OCI-LY7 (cell line): ENCODE measurements at regions of chr12 and their contacts with region 1.

Region 1: DNA sequence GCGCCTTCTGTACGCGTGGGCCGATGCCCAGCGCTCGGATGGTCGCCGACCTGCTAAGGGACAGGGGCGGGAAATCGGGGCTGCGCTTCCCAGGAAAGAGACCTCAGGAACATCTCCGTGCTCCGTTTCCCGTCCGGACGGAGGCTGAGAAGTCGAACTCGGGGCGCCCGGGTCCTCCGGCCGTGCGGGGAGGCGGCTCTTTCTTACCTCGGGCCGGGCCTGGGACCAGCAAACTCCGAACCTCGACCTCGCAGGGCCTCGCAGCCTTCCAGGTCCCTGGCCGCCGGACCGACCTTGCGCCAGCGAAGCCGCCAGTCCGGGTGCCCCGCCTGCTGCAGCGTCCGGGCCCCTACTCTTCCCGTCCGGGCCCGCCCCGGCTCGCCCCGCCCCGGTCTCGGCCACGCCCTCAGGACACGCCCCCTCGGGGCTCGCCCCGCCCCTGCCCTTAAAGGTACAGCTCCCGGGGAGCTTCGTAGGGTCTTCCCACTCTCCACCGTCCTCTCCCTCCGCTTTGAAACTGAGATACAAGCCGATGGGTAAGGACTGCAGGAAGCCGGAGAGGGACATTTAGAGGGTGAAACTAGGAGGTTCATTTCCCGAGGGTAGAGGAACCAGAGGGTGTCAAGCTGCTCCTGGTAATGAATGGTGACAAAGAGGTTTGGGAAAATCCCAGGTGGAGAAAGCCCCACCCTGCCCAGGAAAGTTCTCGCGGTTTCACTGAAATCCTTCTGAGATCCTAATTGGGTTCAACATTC is at the start of gene SLC8B1:
- DNase-seq: peak; percentile 86
- H3K4me3 ChIP-seq: peak within 1 kb of the TSS; percentile 77
- H3K27ac ChIP-seq: peak within 1 kb of the TSS; percentile 74
- H3K4me1 ChIP-seq: peaks cover 26% of the 10 kb centered on the region
- CTCF ChIP-seq: no peak
- total RNA-seq, gene SLC8B1: 40.6 and 47.1 TPM in 2 replicates

Region 2: GRCh38 chr12:112950701-112951100 is 384.3 kb before region 1 on chr12:
- CTCF ChIA-PET with region 1: no interaction called
- POLR2A ChIA-PET with region 1: no interaction called
- intact Hi-C with region 1: no loop called
- DNase-seq: no peak
- H3K4me3 ChIP-seq: no peak overlapping the region
- H3K27ac ChIP-seq: no peak overlapping the region
- H3K4me1 ChIP-seq: no peaks in the 10 kb centered on the region
- CTCF ChIP-seq: no peak

Region 3: DNA sequence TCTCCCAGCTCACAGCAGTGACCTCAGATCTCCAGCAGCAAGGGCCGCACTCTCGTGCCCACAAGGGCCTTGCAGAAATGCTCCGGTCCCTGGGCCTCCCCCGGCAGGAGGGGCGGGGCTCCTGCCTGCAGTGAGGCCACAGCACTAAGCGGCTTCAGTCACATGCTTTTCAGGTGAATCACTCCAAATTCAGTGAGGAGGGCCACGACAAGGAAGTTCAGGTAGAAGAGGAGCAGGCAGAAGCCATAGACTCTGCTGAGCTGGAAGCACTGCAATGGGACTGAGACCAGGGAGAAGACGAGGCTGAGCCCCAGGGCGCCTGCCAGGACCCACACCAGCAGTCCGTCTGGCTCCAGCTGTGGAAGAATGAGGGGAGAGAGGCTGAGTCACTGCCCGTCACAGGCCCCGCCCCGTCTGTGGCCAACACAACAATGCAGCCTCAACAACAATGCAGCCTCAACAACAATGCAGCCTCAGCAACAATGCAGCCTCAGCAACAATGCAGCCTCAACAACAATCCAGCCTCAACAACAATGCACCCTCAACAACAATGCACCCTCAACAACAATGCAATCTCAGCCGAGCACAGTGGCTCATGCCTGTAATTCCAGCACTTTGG is 35.2 kb before region 1 on chr12:
- CTCF ChIA-PET with region 1: no interaction called
- POLR2A ChIA-PET with region 1: no interaction called
- intact Hi-C with region 1: no loop called
- DNase-seq: no peak
- H3K4me3 ChIP-seq: no peak overlapping the region
- H3K27ac ChIP-seq: no peak overlapping the region
- H3K4me1 ChIP-seq: no peaks in the 10 kb centered on the region
- CTCF ChIP-seq: no peak

Region 4: DNA sequence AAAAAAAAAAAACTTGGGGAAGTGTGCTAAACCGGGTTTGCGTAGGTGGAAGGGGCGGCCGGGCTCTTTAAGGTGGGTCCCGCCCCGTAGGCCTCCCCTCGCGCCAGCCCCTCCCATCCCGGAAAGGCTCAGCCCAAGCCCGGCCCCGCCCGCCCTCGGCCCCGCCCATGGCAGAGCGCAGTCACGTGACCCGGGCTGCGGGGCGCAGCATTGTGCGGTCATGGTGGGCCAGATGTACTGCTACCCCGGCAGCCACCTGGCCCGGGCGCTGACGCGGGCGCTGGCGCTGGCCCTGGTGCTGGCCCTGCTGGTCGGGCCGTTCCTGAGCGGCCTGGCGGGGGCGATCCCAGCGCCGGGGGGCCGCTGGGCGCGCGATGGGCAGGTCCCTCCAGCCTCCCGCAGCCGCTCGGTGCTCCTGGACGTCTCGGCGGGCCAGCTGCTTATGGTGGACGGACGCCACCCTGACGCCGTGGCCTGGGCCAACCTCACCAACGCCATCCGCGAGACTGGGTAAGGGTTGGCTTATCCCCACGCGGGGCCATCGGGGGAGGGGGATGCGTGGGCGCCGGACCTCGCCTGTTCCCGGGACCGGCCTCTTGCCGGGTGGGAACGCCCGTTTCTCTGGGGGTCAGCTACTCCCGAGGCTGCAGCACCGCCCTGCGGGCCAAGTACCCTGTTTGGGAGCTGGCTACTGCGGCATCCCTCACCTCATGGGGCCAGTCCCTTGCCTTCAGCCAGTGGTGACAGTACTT is 23.6 kb after region 1 on chr12 and contains the start of gene PLBD2:
- CTCF ChIA-PET with region 1: interaction called, 4 read pairs
- POLR2A ChIA-PET with region 1: interaction called, 6 read pairs
- intact Hi-C with region 1: loop called (anchors 1 kb)
- DNase-seq: peak; percentile 96
- H3K4me3 ChIP-seq: peak within 1 kb of the TSS; percentile 95
- H3K27ac ChIP-seq: no peak within 1 kb of the TSS
- H3K4me1 ChIP-seq: peaks cover 19% of the 10 kb centered on the region
- CTCF ChIP-seq: no peak
- total RNA-seq, gene PLBD2: 2.3 and 3.4 TPM in 2 replicates

Region 5: GRCh38 chr12:114313910-114314309 is 978.9 kb after region 1 on chr12:
- CTCF ChIA-PET with region 1: interaction called, 10 read pairs
- POLR2A ChIA-PET with region 1: no interaction called
- intact Hi-C with region 1: no loop called
- DNase-seq: no peak
- H3K4me3 ChIP-seq: no peak overlapping the region
- H3K27ac ChIP-seq: no peak overlapping the region
- H3K4me1 ChIP-seq: no peaks in the 10 kb centered on the region
- CTCF ChIP-seq: no peak